Mammary epithelial cell (primary cell): ENCODE measurements at regions of chr9 and their contacts with region 1.

Region 1: DNA sequence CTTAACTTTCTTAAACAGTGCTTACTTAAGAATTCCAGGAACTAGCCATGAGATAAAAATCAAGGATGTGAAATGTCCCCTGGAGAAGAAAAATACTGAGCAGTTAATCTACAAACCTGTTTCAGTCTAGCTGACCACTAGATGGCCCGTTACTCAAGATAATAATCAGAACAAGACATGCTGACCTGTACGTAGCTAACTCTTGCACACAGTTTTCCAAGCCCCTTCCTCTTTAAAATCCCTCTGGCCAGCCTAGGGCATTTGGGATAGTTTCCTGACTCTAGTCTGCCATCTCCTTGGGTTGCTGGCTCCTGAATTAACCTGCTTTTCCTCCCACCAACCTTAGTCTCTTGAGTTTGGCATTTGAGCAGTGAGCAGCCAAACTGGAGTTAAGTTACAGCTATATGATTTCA is 59.2 kb upstream of the TRAF1 start:
- DNase-seq: peak; percentile 34
- H3K4me3 ChIP-seq: no peak overlapping the region
- H3K27ac ChIP-seq: no peak overlapping the region
- H3K4me1 ChIP-seq: no peaks in the 10 kb centered on the region
- H3K27me3 ChIP-seq: no peaks in the 10 kb centered on the region
- CTCF ChIP-seq: peak; percentile 56 to 67

Region 2: GRCh38 chr9:120750421-120750820 is 235.4 kb before region 1 on chr9:
- CTCF ChIA-PET with region 1: no interaction called
- dilution Hi-C with region 1: no loop called
- in situ Hi-C with region 1: no loop called
- intact Hi-C with region 1: no loop called
- DNase-seq: no peak
- H3K4me3 ChIP-seq: no peak overlapping the region
- H3K27ac ChIP-seq: no peak overlapping the region
- H3K4me1 ChIP-seq: no peaks in the 10 kb centered on the region
- H3K27me3 ChIP-seq: no peaks in the 10 kb centered on the region
- CTCF ChIP-seq: no peak

Region 3: DNA sequence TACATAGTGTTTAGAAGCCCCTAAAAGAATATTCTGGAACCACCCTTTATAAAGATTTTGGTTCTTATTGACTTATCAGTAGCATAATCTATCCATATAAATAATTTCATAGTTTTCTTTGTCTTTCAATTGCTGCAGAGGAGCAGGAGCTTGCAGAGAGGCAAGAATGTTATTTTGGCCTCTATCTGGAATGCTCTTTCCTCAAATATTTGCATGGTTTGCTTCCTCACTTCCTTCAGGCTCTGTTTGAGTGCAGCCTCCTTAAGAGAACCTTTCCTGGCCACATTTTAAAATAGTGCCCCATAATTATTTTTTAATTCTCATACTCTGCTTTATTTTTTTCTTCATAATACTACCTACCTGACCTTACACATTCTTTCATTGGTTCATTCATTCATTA is 62.8 kb after region 1 on chr9:
- CTCF ChIA-PET with region 1: no interaction called
- dilution Hi-C with region 1: no loop called
- in situ Hi-C with region 1: no loop called
- intact Hi-C with region 1: no loop called
- DNase-seq: no peak
- H3K4me3 ChIP-seq: no peak overlapping the region
- H3K27ac ChIP-seq: no peak overlapping the region
- H3K4me1 ChIP-seq: no peaks in the 10 kb centered on the region
- H3K27me3 ChIP-seq: no peaks in the 10 kb centered on the region
- CTCF ChIP-seq: no peak

Region 4: DNA sequence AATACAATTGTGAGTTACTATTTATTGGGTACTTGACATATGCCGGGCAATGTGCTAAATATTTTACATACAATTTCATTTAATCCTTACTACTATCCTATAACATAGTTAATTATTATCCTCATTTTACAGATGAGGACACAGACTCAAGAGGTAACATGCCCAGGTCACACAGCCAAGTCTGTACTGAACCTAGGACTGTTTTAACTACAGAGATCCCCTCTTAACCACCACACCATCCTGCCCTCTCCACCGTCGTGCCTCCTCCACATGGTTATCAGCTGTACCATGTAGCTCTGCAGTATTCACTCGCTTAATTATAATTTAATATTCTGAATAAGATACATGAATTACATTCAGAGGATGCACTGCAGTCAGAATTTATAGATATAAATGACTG is 210.6 kb after region 1 on chr9:
- CTCF ChIA-PET with region 1: no interaction called
- dilution Hi-C with region 1: no loop called
- in situ Hi-C with region 1: no loop called
- intact Hi-C with region 1: loop called (anchors 10 kb)
- DNase-seq: peak; percentile 20
- H3K4me3 ChIP-seq: peak overlapping the region in 1 of 3 experiments; percentile 49
- H3K27ac ChIP-seq: peak overlapping the region; percentile 94
- H3K4me1 ChIP-seq: peaks cover 46% of the 10 kb centered on the region
- H3K27me3 ChIP-seq: no peaks in the 10 kb centered on the region
- CTCF ChIP-seq: no peak